ENCODE measurements at regions of chr3 and their contacts with region 1.

Region 1: GRCh38 chr3:16264708-16265454 is at the starts of genes DPH3 and OXNAD1:
- DNase-seq: peak; percentile 100
- H3K4me3 ChIP-seq: peak within 1 kb of the TSS; percentile 60 to 85 (median 77)
- H3K27ac ChIP-seq: peak within 1 kb of the TSS; percentile 90 to 94 (median 92)
- H3K4me1 ChIP-seq: peaks cover 0 to 50% (median 25%) of the 10 kb centered on the region in 4 donors
- H3K27me3 ChIP-seq: no peaks in the 10 kb centered on the region
- CTCF ChIP-seq: peak in 3 of 4 experiments; percentile 21 to 44 (median 22)
- EP300 ChIP-seq: peak in 1 of 4 donors; percentile 85
- POLR2A ChIP-seq: peak; percentile 59 to 60
- total RNA-seq, gene DPH3: 23.7 to 28.8 (median 25.7) TPM
- total RNA-seq, gene OXNAD1: 11.3 to 17.5 (median 12.2) TPM

Region 2: DNA sequence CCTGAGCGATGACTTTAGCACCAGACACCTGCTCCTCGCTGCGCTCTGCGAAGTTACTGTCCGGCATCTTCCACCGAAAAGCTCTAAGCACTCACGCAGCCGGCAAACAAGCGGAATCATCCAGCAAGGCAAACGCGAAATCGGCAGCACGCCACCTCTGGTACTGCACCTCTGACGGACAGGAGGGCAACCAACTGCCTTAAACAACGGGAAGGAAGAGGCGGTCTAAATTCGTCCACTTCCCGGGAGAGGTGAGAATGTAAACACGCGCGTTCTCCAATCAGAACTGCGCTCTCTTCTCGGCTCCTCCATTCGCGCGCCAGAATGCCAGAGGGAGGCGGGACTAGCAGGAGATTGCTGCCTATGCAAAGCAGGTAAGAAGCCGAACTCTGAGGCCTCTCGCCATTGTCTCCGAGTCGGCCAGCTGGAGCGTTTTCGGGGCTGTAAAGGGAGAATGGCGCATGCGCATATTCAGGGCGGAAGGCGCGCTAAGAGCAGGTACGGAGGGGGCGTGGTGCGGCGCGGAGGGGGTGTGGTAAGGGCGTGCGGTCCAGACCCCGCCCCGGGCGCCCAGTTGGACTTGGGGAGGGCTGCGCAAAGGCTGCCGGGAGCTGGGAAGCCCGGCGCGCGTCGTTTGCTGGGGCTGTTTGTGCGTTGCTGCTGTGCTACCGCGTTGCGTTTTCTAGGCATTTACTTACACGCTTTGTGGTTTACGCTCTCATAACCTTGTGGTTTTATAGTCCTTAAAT is 663.3 kb before region 1 on chr3 and contains the starts of genes BTD and HACL1:
- intact Hi-C with region 1: loop called (anchors 10 kb)
- DNase-seq: peak; percentile 99
- H3K4me3 ChIP-seq: peak within 1 kb of the TSS; percentile 88 to 92 (median 90)
- H3K27ac ChIP-seq: peak within 1 kb of the TSS; percentile 83 to 91 (median 88)
- H3K4me1 ChIP-seq: peaks cover 0 to 23% (median 18%) of the 10 kb centered on the region in 4 donors
- H3K27me3 ChIP-seq: no peaks in the 10 kb centered on the region
- CTCF ChIP-seq: peak in 1 of 4 experiments; percentile 42
- EP300 ChIP-seq: no peak
- POLR2A ChIP-seq: peak; percentile 83 to 87
- total RNA-seq, gene BTD: 23.5 to 35.5 (median 30.1) TPM
- total RNA-seq, gene HACL1: 15.5 to 24.7 (median 22.1) TPM

Region 3: DNA sequence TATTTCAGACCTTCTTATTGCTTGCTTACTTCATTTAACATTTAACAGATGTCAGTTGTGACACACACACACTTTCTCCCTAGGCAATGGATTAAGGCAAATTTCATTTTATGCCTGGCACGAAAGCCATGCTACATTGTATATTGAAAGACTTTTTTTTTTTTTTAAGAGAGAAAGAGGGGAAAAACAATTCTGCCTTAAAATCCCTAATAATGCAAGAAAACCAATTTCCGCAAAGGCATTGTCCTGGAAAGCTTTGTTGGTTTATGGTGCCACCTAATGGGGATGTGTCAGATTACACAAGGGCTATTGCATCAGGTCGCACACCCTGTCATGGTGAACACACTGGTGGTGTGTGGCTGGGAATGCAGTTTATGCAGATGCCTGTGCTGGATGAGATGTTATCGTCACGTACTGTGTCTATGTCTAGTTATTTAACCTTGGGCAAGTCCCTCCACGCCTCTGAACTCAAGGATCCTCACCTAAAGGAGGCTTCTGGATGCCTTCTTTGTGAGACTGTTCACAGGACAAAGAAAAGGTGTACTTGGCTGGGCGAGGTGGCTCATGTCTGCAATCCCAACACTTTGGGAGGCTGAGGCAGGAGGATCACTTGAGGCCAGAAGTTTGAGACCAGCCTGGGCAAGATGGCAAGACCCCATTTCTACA is 285.9 kb after region 1 on chr3:
- intact Hi-C with region 1: loop called (anchors 2 kb)
- DNase-seq: peak; percentile 79
- H3K4me3 ChIP-seq: peak overlapping the region in 2 of 4 donors; percentile 13 to 22
- H3K27ac ChIP-seq: no peak overlapping the region
- H3K4me1 ChIP-seq: peaks cover 0 to 6% (median 3%) of the 10 kb centered on the region in 4 donors
- H3K27me3 ChIP-seq: no peaks in the 10 kb centered on the region
- CTCF ChIP-seq: peak; percentile 59 to 83 (median 82)
- EP300 ChIP-seq: no peak
- POLR2A ChIP-seq: no peak